Right ventricle myocardium inferior (tissue), 1 donor: ENCODE measurements at regions of chr16 and their contacts with region 1.

Region 1: GRCh38 chr16:3094289-3095027 is 4.6 kb downstream of the ZSCAN10 start:
- DNase-seq: no peak
- ATAC-seq: no peak

Region 2: DNA sequence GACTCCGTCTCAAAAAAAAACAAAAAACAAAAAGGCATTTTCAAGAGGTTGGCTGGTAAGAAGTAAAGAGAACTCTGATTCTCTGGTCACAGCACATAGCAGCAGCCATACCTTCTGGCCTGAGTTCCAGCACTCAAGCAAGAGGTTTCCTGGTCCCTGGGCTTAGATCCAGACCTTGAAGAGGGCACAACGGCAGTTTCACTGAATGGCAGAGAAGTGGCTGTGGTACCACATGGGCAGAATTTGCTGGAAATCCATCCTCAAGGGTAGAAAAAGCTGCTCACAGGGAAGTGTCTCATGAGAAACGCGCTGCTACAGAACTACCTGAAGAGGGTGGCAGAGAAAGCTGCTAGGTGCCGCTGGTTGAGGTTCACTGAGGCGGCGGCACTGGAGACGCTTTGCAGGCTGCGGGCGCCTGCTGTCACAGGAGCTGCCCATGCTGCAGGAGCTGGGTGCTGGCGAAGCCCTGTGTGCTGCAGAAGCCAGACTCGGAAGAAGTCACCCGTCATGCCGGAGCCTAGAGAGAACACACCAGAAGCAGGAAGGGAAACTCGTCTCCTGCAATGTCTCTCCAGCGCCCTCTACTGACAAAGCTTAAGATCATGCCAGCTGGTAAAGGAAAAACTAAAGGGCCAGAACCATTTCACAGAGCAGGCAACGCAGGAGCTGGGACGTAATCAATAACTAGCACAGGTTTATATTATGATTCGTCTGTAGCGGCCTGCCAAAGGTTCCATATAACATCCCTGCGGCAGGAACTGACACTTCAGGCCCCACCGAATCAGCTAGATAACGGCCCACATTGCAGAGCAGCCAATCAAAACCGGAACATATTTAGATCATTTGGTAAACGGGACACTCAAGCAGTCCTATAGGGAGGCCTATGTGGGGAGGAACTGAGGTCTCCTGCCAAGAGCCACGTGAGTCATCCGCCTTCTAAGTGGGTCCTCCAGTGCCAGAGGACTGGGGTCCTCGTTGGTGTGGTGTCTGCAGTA is 35.0 kb after region 1 on chr16:
- intact Hi-C with region 1: loop called (anchors 1 kb)
- DNase-seq: peak; percentile 85
- ATAC-seq: peak; percentile 81